ENCODE measurements at regions of chr10 and their contacts with region 1.

Region 1: DNA sequence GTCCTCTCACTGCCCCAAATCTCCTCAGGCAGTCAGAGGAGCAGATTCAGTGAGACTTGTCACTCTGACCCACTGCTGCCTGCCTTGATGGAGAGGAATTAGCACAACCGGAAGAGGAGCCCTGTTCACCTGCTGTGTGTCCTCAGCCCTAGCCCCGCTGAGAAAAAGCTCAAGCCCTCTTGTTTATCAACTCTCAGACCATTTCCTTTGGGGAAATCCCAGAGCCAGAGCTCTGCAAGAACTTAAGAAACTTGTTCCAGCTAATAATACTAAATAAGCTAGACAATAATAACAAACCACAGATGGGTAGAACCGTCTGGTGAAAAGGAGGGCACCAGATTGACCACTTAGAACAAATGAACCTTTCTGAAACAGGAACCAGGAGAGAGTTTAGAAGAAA is 37.7 kb upstream of the ITGB1 start:
- DNase-seq: no peak
- ATAC-seq: no peak
- H3K4me3 ChIP-seq: no peak overlapping the region
- H3K4me3 Mint-ChIP-seq: no peak overlapping the region
- H3K27ac ChIP-seq: no peak overlapping the region
- H3K27ac Mint-ChIP-seq: no peak overlapping the region
- H3K4me1 ChIP-seq: peaks cover 6% of the 10 kb centered on the region
- H3K4me1 Mint-ChIP-seq: no peaks in the 10 kb centered on the region
- H3K27me3 ChIP-seq: no peaks in the 10 kb centered on the region
- H3K27me3 Mint-ChIP-seq: no peaks in the 10 kb centered on the region
- CTCF ChIP-seq: no peak

Region 2: DNA sequence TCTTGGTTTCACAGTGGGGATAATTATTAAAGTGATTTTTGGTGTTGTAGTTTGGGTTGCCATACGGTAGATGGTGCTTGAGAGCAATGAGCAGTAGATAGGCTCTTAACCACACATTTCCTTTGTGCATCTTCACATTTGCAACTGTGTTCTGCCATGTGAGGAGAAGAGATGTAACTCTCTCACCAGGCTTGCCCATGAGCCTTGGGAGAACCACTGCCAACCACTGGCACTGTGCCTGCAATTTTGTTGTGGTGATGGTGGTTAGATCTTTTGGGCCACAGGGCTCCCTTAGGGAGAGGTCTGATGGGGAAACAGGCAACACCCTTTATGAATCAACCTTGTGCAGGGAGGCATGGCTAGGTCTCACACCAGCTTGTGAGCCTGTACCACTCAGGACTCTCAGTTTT is 345.5 kb before region 1 on chr10:
- CTCF ChIA-PET with region 1: no interaction called
- POLR2A ChIA-PET with region 1: no interaction called
- intact Hi-C with region 1: loop called in 1 of 2 experiments (anchors 10 kb)
- DNase-seq: peak in 4 of 14 experiments; percentile 9 to 43 (median 30)
- ATAC-seq: peak; percentile 56
- H3K4me3 ChIP-seq: no peak overlapping the region
- H3K4me3 Mint-ChIP-seq: no peak overlapping the region
- H3K27ac ChIP-seq: no peak overlapping the region
- H3K27ac Mint-ChIP-seq: no peak overlapping the region
- H3K4me1 ChIP-seq: peaks cover 10% of the 10 kb centered on the region
- H3K4me1 Mint-ChIP-seq: peaks cover 15% of the 10 kb centered on the region
- H3K27me3 ChIP-seq: no peaks in the 10 kb centered on the region
- H3K27me3 Mint-ChIP-seq: no peaks in the 10 kb centered on the region
- CTCF ChIP-seq: no peak

Region 3: DNA sequence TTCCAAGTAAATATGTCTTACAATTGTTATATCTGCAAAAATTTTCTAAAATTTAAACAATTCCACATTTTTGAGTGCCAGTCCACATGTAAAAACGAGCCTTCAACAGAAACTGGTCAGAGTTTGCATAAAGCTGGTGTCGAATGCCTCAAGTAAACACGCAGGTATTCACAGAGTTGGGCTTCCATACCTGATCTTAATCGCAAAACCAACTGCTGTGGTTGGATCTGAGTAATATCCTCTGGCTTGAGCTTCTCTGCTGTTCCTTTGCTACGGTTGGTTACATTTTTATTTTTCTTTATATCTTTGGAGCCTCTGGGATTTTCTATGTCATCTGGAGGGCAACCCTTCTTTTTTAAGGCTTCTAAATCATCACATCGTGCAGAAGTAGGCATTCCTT is 66.1 kb before region 1 on chr10:
- CTCF ChIA-PET with region 1: no interaction called
- POLR2A ChIA-PET with region 1: no interaction called
- intact Hi-C with region 1: loop called in 1 of 2 experiments (anchors 5 kb)
- DNase-seq: peak in 3 of 14 experiments; percentile 53 to 63 (median 54)
- ATAC-seq: peak; percentile 69
- H3K4me3 ChIP-seq: no peak overlapping the region
- H3K4me3 Mint-ChIP-seq: no peak overlapping the region
- H3K27ac ChIP-seq: no peak overlapping the region
- H3K27ac Mint-ChIP-seq: no peak overlapping the region
- H3K4me1 ChIP-seq: peaks cover 3% of the 10 kb centered on the region
- H3K4me1 Mint-ChIP-seq: peaks cover 16% of the 10 kb centered on the region
- H3K27me3 ChIP-seq: no peaks in the 10 kb centered on the region
- H3K27me3 Mint-ChIP-seq: no peaks in the 10 kb centered on the region
- CTCF ChIP-seq: no peak

Region 4: DNA sequence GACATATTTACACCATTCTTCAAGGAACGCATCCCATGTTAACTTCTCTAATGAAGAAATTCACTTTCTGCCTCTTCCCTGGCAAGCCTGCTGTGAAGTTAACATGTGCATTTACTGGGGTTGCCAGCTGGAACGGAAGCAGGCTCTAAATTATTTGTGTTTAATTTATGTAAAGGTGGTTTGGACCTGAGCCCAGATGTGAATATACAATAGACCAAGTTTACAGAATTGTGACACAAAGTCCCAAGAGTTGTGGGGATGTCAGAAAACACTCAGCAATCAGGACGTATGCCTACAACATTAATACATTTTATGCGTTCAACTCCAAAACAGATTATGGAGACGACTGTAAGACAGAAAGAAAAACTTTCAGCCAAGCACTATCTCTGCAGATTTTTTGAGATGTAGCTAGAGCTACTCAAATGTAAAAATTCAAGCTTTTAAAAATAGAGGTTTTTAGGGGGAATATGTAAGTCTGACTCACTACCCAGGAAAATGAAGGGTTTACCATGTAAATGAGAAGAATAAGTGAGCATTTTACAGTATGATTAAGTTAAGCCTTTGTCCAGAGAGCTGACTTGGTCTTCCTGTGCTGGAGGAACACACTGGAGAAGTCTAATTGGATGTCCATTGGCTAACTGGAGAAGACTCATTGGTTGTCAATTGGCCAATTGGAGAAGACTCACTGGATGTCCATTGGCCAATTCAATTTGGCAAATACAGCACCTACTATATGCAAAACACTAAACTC is 319.2 kb after region 1 on chr10:
- CTCF ChIA-PET with region 1: no interaction called
- POLR2A ChIA-PET with region 1: no interaction called
- intact Hi-C with region 1: no loop called
- DNase-seq: no peak
- ATAC-seq: no peak
- H3K4me3 ChIP-seq: no peak overlapping the region
- H3K4me3 Mint-ChIP-seq: no peak overlapping the region
- H3K27ac ChIP-seq: no peak overlapping the region
- H3K27ac Mint-ChIP-seq: no peak overlapping the region
- H3K4me1 ChIP-seq: no peaks in the 10 kb centered on the region
- H3K4me1 Mint-ChIP-seq: no peaks in the 10 kb centered on the region
- H3K27me3 ChIP-seq: no peaks in the 10 kb centered on the region
- H3K27me3 Mint-ChIP-seq: peaks cover 18% of the 10 kb centered on the region
- CTCF ChIP-seq: no peak